ENCODE measurements at regions of chr19 and their contacts with region 1.

Region 1: GRCh38 chr19:23321948-23322549 is 71.9 kb upstream of the ZNF724 start:
- DNase-seq: no peak
- H3K4me3 ChIP-seq: no peak overlapping the region
- H3K27ac ChIP-seq: no peak overlapping the region
- H3K4me1 ChIP-seq: no peaks in the 10 kb centered on the region
- H3K27me3 ChIP-seq: no peaks in the 10 kb centered on the region
- CTCF ChIP-seq: no peak
- POLR2A ChIP-seq: no peak

Region 2: DNA sequence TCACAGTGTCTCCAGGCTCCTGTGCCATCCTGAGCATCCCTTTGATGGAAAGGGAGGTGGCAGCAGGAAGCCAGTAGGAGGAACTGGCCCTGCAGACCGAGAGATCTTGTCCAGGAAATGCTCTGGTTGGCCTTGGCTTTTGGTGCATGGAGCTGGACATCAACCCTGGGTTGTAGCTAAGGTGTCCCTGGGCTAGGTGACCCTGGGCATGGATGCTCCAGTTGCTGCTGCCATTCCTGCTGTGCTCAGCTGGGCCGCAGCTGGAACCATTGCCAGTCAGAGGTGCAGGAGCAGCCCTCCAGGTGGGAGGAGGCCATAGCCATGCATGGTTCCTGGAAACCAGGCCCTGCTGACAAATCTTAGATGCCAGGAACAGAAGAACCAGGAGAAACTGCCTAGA is 967.4 kb before region 1 on chr19:
- intact Hi-C with region 1: no loop called
- DNase-seq: peak in 1 of 2 donors; percentile 54
- H3K4me3 ChIP-seq: no peak overlapping the region
- H3K27ac ChIP-seq: no peak overlapping the region
- H3K4me1 ChIP-seq: no peaks in the 10 kb centered on the region
- H3K27me3 ChIP-seq: no peaks in the 10 kb centered on the region
- CTCF ChIP-seq: no peak
- POLR2A ChIP-seq: no peak

Region 3: DNA sequence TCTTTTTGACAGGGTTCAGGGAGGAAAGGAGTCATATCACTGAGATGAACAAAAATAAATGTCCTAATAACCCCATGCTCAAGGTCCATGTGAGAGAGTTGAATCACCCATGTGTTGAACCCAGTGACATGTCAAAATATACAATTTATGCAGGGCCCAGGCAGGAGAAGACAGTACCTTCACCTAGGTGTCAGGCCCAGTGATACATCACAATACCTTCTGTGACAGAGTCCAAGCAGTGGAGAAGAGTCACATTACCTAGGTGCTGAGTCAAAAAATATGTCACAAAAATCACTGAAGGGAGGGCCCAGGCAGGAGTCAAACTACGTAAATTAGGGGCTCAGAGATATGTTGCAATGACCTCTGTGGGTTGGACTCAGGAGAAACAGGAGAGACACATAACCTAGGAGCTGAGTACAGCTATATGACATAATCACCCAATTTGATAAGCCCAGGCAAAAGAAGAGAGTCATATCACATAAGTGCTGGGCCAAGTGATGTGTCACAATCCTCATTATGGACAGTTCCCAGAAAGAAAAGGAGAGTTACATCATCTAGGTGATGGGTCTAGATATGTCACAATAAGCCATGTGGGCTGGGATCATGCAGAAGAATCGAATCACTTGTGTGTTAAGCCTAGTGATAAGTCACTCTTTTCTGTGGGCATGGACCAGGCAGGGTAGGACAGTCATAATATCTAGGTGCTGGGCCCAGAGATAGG is 58.0 kb before region 1 on chr19:
- intact Hi-C with region 1: no loop called
- DNase-seq: no peak
- H3K4me3 ChIP-seq: no peak overlapping the region
- H3K27ac ChIP-seq: no peak overlapping the region
- H3K4me1 ChIP-seq: no peaks in the 10 kb centered on the region
- H3K27me3 ChIP-seq: no peaks in the 10 kb centered on the region
- CTCF ChIP-seq: no peak
- POLR2A ChIP-seq: no peak

Region 4: GRCh38 chr19:23470873-23471545 is 149.0 kb after region 1 on chr19:
- intact Hi-C with region 1: loop called (anchors 1 kb)
- DNase-seq: no peak
- H3K4me3 ChIP-seq: peak overlapping the region; percentile 20 to 41
- H3K27ac ChIP-seq: no peak overlapping the region
- H3K4me1 ChIP-seq: no peaks in the 10 kb centered on the region
- H3K27me3 ChIP-seq: no peaks in the 10 kb centered on the region
- CTCF ChIP-seq: no peak
- POLR2A ChIP-seq: no peak

Measured in vagina (tissue), 2 donors.